ENCODE measurements at regions of chr7 and their contacts with region 1.

Region 1: DNA sequence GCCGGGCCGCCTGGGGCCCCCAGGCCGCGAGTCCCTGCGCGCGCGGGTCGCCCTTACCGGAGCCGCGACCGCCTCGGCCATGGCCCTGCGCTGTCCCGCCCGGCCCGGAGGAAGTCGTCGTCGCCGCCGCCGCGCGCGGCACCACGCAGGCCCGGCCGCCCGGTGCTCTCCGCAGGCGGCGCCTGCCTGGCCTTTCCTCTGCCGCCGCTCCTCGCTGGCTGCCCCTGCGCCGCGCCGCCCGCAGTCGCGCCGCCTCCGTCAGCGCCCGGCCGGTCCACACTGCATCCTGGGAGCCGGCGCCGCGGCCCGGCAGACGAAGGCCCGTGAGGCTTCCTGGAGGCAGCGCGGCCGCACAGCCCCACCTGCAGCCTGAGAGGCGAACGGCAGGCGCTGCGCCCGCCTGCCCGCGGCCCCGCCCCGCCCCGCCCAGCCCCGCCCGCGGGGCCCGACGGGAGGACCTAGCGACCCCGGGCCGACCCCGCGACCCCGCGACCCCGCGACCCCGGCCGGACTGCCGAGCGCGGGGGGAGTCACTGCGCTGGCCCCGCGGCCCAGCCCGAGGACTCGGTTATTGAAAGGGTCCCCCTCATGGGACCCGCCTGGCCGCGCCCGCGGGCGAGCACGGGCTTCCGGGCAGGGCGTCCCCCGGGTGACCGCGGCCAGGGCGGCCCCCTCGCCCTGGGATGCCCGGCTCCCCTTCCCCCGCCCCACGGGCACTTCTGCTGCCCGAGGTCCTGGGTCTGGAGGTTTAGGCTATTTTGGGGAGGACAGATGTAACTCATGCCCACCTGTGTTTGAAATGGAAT is at the start of gene ZNF746:
- DNase-seq: peak; percentile 91
- ATAC-seq: peak; percentile 93
- H3K4me3 Mint-ChIP-seq: peak within 1 kb of the TSS; percentile 93
- H3K27ac Mint-ChIP-seq: peak within 1 kb of the TSS; percentile 91
- H3K4me1 Mint-ChIP-seq: peaks cover 28% of the 10 kb centered on the region
- H3K27me3 Mint-ChIP-seq: no peaks in the 10 kb centered on the region
- total RNA-seq, gene ZNF746: 14.2 to 15.2 TPM

Region 2: DNA sequence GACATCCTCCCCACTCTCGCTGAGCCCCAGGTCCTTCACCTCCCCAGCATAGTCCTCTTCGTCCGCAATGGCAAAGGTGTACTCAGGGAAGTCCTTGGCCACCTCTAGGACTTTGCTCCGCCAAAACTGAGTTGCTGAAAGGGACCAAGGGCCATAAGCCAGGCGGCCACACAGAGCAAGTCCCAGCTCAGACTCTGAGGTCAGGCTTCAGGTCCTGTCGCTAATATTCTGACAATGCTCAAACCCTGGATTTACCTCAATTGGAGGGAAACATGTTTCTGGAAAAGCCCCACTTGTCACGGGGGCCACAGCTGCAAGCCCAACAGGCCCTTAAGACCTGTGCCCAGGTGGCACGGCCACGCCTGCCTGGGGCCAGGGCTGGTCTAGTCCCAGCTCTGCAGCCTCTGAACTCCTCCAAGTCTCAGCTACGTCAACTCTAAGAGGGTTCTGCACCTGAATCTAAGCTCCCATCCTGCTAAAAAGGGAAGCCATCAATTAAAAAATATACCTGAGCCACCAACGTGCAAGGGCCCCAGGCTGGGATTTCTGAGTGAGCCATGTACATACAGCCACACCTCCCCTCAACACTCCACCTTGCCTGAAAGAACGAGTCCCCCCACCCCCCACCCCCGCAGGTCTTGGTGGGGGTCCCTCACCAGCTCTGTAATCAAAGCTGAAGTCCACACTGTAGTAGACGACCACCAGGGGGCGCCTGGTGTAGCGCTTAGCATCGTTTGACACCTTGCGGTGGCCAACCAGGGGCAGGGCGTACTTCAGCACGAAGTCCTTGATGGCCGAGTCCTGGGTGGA is 492.2 kb before region 1 on chr7:
- CTCF ChIA-PET with region 1: no interaction called
- POLR2A ChIA-PET with region 1: no interaction called
- intact Hi-C with region 1: loop called in 1 of 2 experiments (anchors 5 kb)
- DNase-seq: peak; percentile 90
- ATAC-seq: peak; percentile 90
- H3K4me3 Mint-ChIP-seq: no peak overlapping the region
- H3K27ac Mint-ChIP-seq: peak overlapping the region; percentile 8
- H3K4me1 Mint-ChIP-seq: peaks cover 2% of the 10 kb centered on the region
- H3K27me3 Mint-ChIP-seq: no peaks in the 10 kb centered on the region

Region 3: DNA sequence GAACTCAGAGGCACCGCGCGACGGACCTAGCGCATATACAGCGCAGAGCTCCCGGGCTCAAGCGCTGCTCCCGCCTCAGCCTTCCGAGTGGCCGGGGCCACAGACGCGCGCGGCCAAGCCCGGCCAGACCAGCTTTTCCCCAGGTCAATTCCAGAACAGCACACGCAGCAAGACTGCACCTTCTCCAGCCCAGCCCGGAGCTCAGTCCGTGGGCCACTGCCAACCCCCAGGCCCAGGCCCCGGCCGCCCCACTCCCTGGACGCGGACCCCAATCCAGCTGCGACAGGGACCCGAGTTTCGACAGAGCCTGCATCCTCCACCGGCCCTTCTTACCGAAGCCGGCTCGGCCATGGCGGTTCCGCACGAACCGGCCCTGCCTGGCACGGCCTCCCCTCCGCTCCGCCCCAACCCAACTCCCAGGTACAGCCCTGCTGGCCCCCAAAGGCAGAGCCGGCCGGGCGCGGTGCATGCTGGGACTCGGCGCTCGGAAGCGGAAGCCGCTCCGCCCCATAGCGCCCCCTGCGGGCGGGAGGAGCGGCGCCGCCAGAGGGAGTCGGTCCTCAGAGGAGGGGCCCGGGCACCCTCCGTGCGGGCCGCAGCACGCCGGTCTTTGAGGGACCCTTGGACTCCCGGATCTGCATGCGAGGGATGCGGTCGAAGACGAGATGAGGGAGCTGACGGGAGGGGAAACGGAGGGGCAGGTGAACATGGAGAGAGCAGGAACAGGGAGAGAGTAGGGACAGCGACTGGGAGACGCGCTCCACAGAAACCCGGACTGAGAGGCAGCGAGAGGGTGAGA is 371.6 kb before region 1 on chr7 and contains the start of gene ZNF425:
- CTCF ChIA-PET with region 1: no interaction called
- POLR2A ChIA-PET with region 1: no interaction called
- intact Hi-C with region 1: loop called in 1 of 2 experiments (anchors 1 kb)
- DNase-seq: peak; percentile 96
- ATAC-seq: peak; percentile 88
- H3K4me3 Mint-ChIP-seq: peak within 1 kb of the TSS; percentile 83
- H3K27ac Mint-ChIP-seq: peak within 1 kb of the TSS; percentile 99
- H3K4me1 Mint-ChIP-seq: peaks cover 21% of the 10 kb centered on the region
- H3K27me3 Mint-ChIP-seq: no peaks in the 10 kb centered on the region
- total RNA-seq, gene ZNF425: 0.43 to 0.95 TPM

Region 4: GRCh38 chr7:149209518-149210269 is 288.0 kb before region 1 on chr7:
- CTCF ChIA-PET with region 1: no interaction called
- POLR2A ChIA-PET with region 1: no interaction called
- intact Hi-C with region 1: loop called in 1 of 2 experiments (anchors 1 kb)
- DNase-seq: peak; percentile 93
- ATAC-seq: peak; percentile 89
- H3K4me3 Mint-ChIP-seq: peak overlapping the region; percentile 38
- H3K27ac Mint-ChIP-seq: peak overlapping the region; percentile 94
- H3K4me1 Mint-ChIP-seq: peaks cover 32% of the 10 kb centered on the region
- H3K27me3 Mint-ChIP-seq: no peaks in the 10 kb centered on the region

Region 5: GRCh38 chr7:149310113-149310836 is 187.4 kb before region 1 on chr7:
- CTCF ChIA-PET with region 1: interaction called, 3 read pairs
- POLR2A ChIA-PET with region 1: no interaction called
- intact Hi-C with region 1: loop called in 1 of 2 experiments (anchors 2 kb)
- DNase-seq: no peak
- ATAC-seq: peak; percentile 66
- H3K4me3 Mint-ChIP-seq: no peak overlapping the region
- H3K27ac Mint-ChIP-seq: no peak overlapping the region
- H3K4me1 Mint-ChIP-seq: peaks cover 6% of the 10 kb centered on the region
- H3K27me3 Mint-ChIP-seq: no peaks in the 10 kb centered on the region

Region 6: GRCh38 chr7:149598721-149599306 is 101.2 kb after region 1 on chr7:
- CTCF ChIA-PET with region 1: interaction called, 3 read pairs
- POLR2A ChIA-PET with region 1: no interaction called
- intact Hi-C with region 1: loop called in 1 of 2 experiments (anchors 1 kb)
- DNase-seq: peak; percentile 65
- ATAC-seq: peak; percentile 38
- H3K4me3 Mint-ChIP-seq: no peak overlapping the region
- H3K27ac Mint-ChIP-seq: no peak overlapping the region
- H3K4me1 Mint-ChIP-seq: peaks cover 34% of the 10 kb centered on the region
- H3K27me3 Mint-ChIP-seq: no peaks in the 10 kb centered on the region

Region 7: DNA sequence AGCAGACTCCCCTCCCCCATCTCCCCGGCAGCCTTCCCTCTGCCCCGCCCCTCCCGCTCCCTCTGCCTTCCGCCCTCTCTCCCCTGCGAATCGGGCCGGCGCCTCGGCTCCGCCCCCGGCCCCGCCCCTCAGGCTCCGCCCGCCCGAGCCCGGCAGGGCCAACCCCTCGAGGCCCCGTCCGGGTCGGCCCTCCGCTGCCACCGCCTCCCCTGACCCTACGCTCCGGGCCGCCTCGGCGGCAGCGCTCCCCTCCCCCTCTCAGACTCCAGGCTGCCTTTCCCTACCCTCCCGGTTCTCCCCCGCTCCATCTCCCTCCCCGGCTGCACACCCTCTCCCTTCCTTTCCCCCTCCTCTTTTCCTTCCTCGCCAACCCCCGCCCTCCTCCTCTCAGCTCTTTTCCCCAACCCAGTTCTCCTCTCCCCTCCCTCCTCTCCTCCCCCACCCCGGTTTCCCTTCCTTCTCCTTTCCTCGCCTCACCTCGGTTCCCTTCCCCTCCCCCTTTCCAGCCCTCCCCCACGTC is 274.1 kb after region 1 on chr7:
- CTCF ChIA-PET with region 1: no interaction called
- POLR2A ChIA-PET with region 1: no interaction called
- intact Hi-C with region 1: loop called in 1 of 2 experiments (anchors 1 kb)
- DNase-seq: peak; percentile 93
- ATAC-seq: peak; percentile 98
- H3K4me3 Mint-ChIP-seq: peak overlapping the region; percentile 59
- H3K27ac Mint-ChIP-seq: no peak overlapping the region
- H3K4me1 Mint-ChIP-seq: peaks cover 2% of the 10 kb centered on the region
- H3K27me3 Mint-ChIP-seq: peaks cover 9% of the 10 kb centered on the region